SK-N-SH (cell line): ENCODE measurements at regions of chr16 and their contacts with region 1.

Region 1: GRCh38 chr16:10964039-10964890 is 19.9 kb downstream of the CLEC16A start:
- DNase-seq: peak; percentile 79
- H3K4me3 ChIP-seq: peak overlapping the region in 1 of 2 experiments; percentile 30; a peak in 1 of 4 replicates
- H3K27ac ChIP-seq: peak overlapping the region in 1 of 2 experiments; percentile 29; a peak in 1 of 4 replicates
- H3K4me1 ChIP-seq: peaks cover 13 to 25% of the 10 kb centered on the region in 2 experiments
- H3K27me3 ChIP-seq: no peaks in the 10 kb centered on the region
- CTCF ChIP-seq: peak; percentile 92
- EP300 ChIP-seq: no peak
- RAD21 ChIP-seq: peak; percentile 94

Region 2: DNA sequence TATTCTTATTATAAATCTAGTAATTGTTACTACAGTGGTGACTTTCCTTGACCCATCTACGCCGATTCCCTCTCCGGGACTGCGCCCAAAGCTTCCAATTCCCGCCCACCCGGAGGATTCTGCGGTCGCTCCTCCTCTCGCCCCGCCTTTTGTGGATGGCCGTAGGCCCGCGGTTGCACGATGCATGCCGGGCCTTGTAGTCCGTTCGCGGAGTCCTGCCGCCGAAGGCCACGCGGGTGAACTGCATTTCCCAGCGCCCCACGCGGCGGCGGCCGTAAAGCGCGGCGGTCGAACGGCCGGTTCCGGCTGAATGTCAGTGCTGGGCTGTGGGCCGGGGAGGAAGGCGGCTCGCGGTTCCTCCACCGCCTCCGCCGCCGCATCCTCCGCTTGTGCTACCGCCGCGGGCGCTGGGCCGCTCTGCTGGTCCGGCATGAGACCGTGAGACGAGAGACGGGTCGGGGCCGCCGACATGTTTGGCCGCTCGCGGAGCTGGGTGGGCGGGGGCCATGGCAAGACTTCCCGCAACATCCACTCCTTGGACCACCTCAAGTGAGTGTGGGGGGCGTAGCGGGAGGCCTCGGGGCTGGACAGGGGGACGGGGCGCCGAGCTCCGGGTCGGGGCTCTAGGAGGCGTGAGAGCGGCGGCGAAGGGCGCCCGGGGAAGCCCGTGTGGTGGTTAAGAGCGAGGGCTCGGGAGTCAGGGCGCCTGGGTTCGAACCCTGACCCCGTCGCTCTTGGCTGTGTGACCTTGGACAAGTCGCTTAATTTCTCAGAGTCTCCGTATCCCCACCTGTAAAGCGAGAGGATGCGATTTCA is 19.8 kb before region 1 on chr16 and contains the start of gene CLEC16A:
- CTCF ChIA-PET with region 1: interaction called, 199 read pairs
- POLR2A ChIA-PET with region 1: no interaction called
- DNase-seq: peak; percentile 95
- H3K4me3 ChIP-seq: peak within 1 kb of the TSS; percentile 94 to 95
- H3K27ac ChIP-seq: peak within 1 kb of the TSS; percentile 48 to 72; a peak in 2 of 4 replicates
- H3K4me1 ChIP-seq: peaks cover 10 to 54% of the 10 kb centered on the region in 2 experiments
- H3K27me3 ChIP-seq: no peaks in the 10 kb centered on the region
- CTCF ChIP-seq: no peak; the same call in 1 of the 2 replicates
- EP300 ChIP-seq: no peak; a peak in 1 of 4 replicates
- RAD21 ChIP-seq: no peak
- polyA plus RNA-seq, gene CLEC16A: 9.2 and 13.7 TPM in 2 replicates

Region 3: DNA sequence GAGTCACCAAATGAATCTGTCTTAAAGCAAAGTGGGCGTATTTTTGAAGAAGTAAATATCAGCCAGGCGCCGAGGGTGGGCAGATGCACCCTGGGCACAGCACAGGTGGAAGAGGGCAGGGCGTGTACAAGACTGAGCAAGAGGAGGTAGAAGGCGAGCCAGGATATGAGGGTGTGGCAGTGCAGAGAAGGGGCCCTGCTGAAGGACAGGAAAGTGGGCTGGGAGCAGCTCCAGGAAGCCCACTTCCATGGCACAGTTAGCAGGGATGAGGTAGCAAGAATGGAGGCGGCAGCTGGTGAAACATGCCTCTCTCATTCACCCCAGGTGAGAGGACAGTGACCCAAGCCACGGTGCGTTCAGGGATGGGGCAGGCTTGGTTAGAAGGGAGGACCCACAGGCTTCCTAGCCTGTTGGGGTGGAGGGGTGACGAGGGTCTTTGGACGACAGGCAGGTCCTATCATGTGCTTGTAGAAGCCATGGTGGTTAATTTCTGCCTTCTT is 129.4 kb after region 1 on chr16:
- CTCF ChIA-PET with region 1: interaction called, 14 read pairs
- POLR2A ChIA-PET with region 1: no interaction called
- DNase-seq: no peak
- H3K4me3 ChIP-seq: no peak overlapping the region
- H3K27ac ChIP-seq: no peak overlapping the region
- H3K4me1 ChIP-seq: peaks cover 12 to 26% of the 10 kb centered on the region in 2 experiments
- H3K27me3 ChIP-seq: no peaks in the 10 kb centered on the region
- CTCF ChIP-seq: no peak
- EP300 ChIP-seq: no peak
- RAD21 ChIP-seq: no peak

Region 4: DNA sequence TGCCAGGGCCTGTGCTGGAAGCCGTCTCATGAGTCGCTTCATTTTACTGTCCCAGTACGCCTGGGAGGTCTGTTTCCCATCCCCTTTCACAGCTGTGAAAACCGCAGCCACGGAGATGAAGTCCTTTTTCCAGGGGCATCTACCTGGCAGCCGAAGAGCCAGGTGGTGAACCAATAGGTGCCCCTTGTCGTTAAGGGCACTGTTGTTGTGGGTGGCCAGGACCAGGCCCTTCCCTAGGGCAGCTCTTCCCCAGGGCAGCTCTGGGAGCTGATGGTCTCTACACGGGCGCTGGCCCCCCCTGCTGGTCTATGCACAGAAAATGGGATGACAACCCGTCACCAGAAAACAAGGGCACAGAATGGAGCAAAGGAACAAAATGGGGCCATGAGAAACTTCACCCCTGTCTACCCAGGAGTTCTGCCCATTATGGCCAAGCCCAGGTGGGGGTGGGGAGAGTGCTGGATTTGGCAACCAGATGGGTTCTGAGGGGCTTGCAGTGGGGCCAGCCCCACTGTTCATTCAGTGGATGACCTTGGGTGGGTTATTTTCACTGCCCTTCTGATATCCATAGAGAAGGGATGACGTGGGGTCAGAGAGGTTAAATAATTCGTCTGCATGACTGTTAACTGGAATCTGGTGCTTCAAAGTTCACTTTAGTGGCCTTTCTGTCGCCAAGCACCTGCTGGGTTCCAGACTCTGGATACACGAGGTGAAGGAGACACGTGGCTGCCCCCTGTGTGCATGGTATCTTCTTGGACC is 392.5 kb after region 1 on chr16:
- CTCF ChIA-PET with region 1: interaction called, 17 read pairs
- POLR2A ChIA-PET with region 1: no interaction called
- DNase-seq: peak; percentile 71
- H3K4me3 ChIP-seq: no peak overlapping the region; a peak in 1 of 4 replicates
- H3K27ac ChIP-seq: peak overlapping the region in 1 of 2 experiments; percentile 70; a peak in 2 of 4 replicates
- H3K4me1 ChIP-seq: peaks cover 15 to 26% of the 10 kb centered on the region in 2 experiments; a peak in 3 of 4 replicates
- H3K27me3 ChIP-seq: no peaks in the 10 kb centered on the region
- CTCF ChIP-seq: peak; percentile 69
- EP300 ChIP-seq: no peak
- RAD21 ChIP-seq: peak; percentile 74

Region 5: GRCh38 chr16:11407047-11407982 is 443.1 kb after region 1 on chr16:
- CTCF ChIA-PET with region 1: interaction called, 20 read pairs
- POLR2A ChIA-PET with region 1: no interaction called
- DNase-seq: peak; percentile 75
- H3K4me3 ChIP-seq: no peak overlapping the region; a peak in 1 of 4 replicates
- H3K27ac ChIP-seq: no peak overlapping the region
- H3K4me1 ChIP-seq: peaks cover 17 to 36% of the 10 kb centered on the region in 2 experiments
- H3K27me3 ChIP-seq: no peaks in the 10 kb centered on the region
- CTCF ChIP-seq: peak; percentile 63
- EP300 ChIP-seq: no peak
- RAD21 ChIP-seq: peak; percentile 82